ENCODE measurements at regions of chr11 and their contacts with region 1.

Region 1: GRCh38 chr11:64204464-64204989 is 2.0 kb upstream of the FERMT3 start:
- DNase-seq: peak; percentile 76 to 88
- ATAC-seq: peak; percentile 92 to 96
- H3K4me3 ChIP-seq: no peak overlapping the region
- H3K27ac ChIP-seq: peak overlapping the region; percentile 24 to 78 (median 26)
- H3K4me1 ChIP-seq: peaks cover 17 to 22% of the 10 kb centered on the region in 2 donors
- H3K27me3 ChIP-seq: no peaks in the 10 kb centered on the region
- CTCF ChIP-seq: peak; percentile 55 to 80 (median 69)
- POLR2A ChIP-seq: no peak

Region 2: DNA sequence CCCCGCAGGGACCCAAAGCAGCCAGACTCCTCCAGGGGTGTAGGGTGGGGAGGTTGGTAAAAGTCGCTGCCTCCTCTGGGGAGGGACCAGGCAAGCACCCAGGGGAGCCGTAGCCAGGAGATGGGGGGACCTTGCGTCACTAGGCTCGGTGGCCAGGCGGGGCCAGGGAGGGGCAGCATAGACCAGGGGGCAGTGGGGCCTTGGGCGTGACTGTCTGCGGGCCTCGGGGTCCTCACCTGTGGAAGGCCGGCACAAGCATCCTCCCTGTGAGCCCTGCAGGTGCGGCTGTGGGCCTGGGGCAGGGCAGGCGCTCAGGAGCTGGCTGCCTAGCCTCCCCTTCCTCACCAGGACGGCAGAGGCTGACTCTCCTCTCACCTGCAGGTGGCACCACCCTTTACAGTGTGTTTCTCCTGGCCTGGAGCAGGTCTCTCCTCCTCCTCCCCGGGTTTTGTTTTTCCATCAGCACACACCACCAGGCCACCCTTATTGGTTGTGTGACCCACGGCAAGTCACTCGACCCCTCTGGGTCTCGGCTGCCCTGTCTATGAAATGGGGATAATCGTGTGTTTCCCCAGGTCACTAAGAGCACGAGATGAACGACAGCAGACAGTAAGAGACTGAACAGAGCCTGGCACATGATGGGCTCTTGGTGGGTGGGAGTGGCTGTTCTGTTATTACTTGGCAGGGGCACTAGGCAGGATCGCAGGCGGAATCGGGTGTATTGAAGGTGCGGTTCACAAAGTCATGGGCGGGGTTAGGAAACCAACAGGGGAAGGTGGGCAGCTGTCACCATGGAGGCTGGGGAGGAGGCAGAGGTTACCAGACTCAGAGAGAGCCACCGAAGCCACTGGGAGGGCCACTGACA is 116.1 kb before region 1 on chr11:
- in situ Hi-C with region 1: no loop called
- intact Hi-C with region 1: no loop called
- DNase-seq: no peak
- ATAC-seq: no peak
- H3K4me3 ChIP-seq: no peak overlapping the region
- H3K27ac ChIP-seq: peak overlapping the region in 2 of 4 donors; percentile 9 to 18
- H3K4me1 ChIP-seq: peaks cover 56 to 85% of the 10 kb centered on the region in 2 donors
- H3K27me3 ChIP-seq: no peaks in the 10 kb centered on the region
- CTCF ChIP-seq: peak in 3 of 5 experiments; percentile 11 to 22 (median 17)
- POLR2A ChIP-seq: no peak

Region 3: GRCh38 chr11:64304316-64305072 is 100.0 kb after region 1 on chr11:
- in situ Hi-C with region 1: loop called in 3 of 4 experiments (anchors 5 kb)
- intact Hi-C with region 1: loop called (anchors 1 kb)
- DNase-seq: peak; percentile 77 to 91
- ATAC-seq: peak; percentile 36 to 53
- H3K4me3 ChIP-seq: peak overlapping the region; percentile 58 to 92 (median 64)
- H3K27ac ChIP-seq: peak overlapping the region; percentile 84 to 96 (median 90)
- H3K4me1 ChIP-seq: peaks cover 16 to 34% of the 10 kb centered on the region in 2 donors
- H3K27me3 ChIP-seq: peaks cover 16 to 26% (median 24%) of the 10 kb centered on the region in 3 donors
- CTCF ChIP-seq: peak; percentile 77 to 92 (median 88)
- POLR2A ChIP-seq: no peak

Measured in gastrocnemius medialis (tissue), 4 donors.